Mammary epithelial cell (primary cell): ENCODE measurements at regions of chr2 and their contacts with region 1.

Region 1: GRCh38 chr2:231780909-231781797 is at the start of gene PDE6D:
- DNase-seq: peak; percentile 100
- H3K4me3 ChIP-seq: peak within 1 kb of the TSS; percentile 65 to 95 (median 69)
- H3K27ac ChIP-seq: peak within 1 kb of the TSS; percentile 50
- H3K4me1 ChIP-seq: peaks cover 15% of the 10 kb centered on the region
- H3K27me3 ChIP-seq: no peaks in the 10 kb centered on the region
- CTCF ChIP-seq: no peak
- total RNA-seq, gene PDE6D: 15.2 to 16.2 TPM

Region 2: DNA sequence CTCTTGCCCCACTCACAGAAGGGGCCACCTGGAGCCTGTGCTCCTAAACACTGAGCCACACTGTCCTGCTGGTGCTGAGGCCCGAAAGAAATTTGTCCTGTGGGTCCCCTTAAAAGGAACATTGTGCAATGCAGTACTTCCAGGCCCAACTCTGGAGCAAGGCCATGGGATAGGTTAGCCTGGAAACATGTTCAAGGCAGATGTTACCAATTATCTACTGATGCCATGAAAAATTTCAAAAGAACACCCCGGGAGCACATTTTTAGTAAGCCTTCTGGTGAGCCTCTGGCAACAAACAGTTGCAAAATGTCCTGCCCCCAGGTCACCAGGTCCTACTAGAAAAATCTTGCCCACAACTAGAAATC is 85.2 kb before region 1 on chr2:
- CTCF ChIA-PET with region 1: no interaction called
- dilution Hi-C with region 1: loop called (anchors 5 kb)
- in situ Hi-C with region 1: no loop called
- intact Hi-C with region 1: no loop called
- DNase-seq: no peak
- H3K4me3 ChIP-seq: no peak overlapping the region
- H3K27ac ChIP-seq: no peak overlapping the region
- H3K4me1 ChIP-seq: peaks cover under 1% of the 10 kb centered on the region
- H3K27me3 ChIP-seq: no peaks in the 10 kb centered on the region
- CTCF ChIP-seq: no peak

Region 3: GRCh38 chr2:231810905-231811304 is 29.8 kb after region 1 on chr2:
- CTCF ChIA-PET with region 1: no interaction called
- dilution Hi-C with region 1: no loop called
- in situ Hi-C with region 1: no loop called
- intact Hi-C with region 1: no loop called
- DNase-seq: peak; percentile 55
- H3K4me3 ChIP-seq: no peak overlapping the region
- H3K27ac ChIP-seq: no peak overlapping the region
- H3K4me1 ChIP-seq: peaks cover 12% of the 10 kb centered on the region
- H3K27me3 ChIP-seq: no peaks in the 10 kb centered on the region
- CTCF ChIP-seq: no peak

Region 4: GRCh38 chr2:231877533-231878456 is 96.6 kb after region 1 on chr2:
- CTCF ChIA-PET with region 1: no interaction called
- dilution Hi-C with region 1: no loop called
- in situ Hi-C with region 1: loop called in 1 of 2 experiments (anchors 25 kb)
- intact Hi-C with region 1: no loop called
- DNase-seq: peak; percentile 96
- H3K4me3 ChIP-seq: no peak overlapping the region
- H3K27ac ChIP-seq: peak overlapping the region; percentile 9
- H3K4me1 ChIP-seq: peaks cover 12% of the 10 kb centered on the region
- H3K27me3 ChIP-seq: no peaks in the 10 kb centered on the region
- CTCF ChIP-seq: no peak